Posterior cingulate gyrus (tissue), 11 donors: ENCODE measurements at regions of chr1 and their contacts with region 1.

Region 1: DNA sequence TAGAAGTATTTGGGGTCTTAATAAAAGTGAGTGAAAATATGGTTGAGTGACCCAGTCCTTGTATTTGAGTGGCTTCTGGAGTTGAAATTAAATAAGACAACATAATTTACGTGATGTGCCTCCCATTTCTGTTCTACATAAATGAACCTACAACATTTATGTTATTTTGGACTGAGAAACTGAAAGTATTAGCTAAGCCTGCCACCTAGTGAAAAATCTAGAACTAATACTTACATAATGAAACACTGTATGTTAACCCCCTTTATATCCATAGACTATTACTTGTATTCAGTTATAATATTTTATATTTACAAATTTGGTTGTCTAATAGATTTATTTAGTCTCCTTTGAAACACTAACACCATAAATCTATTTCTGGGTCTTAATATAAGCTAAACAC is 298.9 kb downstream of the KCNT2 start:
- DNase-seq: no peak

Region 2: GRCh38 chr1:196148367-196148970 is 160.9 kb before region 1 on chr1:
- intact Hi-C with region 1: loop called (anchors 10 kb)
- DNase-seq: no peak